CD4-positive, alpha-beta memory T cell (primary cell): ENCODE measurements at regions of chr9 and their contacts with region 1.

Region 1: DNA sequence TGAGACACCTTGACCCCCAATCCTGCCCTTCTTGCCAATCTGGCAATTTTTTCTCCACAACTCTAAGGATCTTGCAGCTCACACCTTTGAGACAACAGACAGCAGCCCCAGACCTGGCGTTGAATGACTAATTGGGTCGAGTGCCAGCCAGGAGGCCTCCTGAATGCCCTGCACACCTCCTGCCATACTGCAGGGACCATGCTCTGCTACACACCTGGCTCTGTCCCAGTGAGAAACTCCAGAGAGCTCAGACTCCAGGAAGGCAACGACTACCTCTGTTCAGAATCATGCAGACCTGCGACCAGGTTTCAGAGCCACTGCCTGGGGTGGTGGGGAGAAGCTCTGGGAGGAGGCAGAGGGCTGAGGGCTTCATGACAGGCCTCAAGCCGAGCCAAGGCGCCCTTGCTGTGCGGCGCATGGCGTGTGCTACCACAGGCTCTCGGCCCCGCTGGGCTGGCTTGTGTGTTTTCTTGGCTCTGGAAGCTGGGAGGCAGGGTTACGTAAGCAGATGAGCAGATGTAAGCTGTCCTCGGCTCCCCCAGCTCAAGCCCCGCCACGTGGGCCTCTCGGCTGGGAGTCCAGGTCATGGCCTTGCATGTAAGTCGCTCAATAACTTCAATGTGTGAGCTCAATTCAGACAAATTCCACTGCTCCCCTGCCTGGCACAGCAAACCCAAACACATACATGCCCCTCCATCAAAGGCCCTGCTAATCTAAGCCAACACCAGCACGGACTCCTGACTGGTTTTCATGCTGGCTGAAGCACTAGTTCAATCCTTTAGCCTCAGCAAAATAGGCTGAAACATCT is 27.5 kb downstream of the B4GALT1 start:
- DNase-seq: no peak
- H3K4me3 ChIP-seq: no peak overlapping the region
- H3K4me3 Mint-ChIP-seq: peak overlapping the region in 7 of 8 donors; percentile 36 to 88 (median 75)
- H3K27ac ChIP-seq: no peak overlapping the region
- H3K27ac Mint-ChIP-seq: peak overlapping the region; percentile 37 to 96 (median 89)
- H3K4me1 ChIP-seq: peaks cover 95% of the 10 kb centered on the region
- H3K4me1 Mint-ChIP-seq: peaks cover 70 to 98% (median 86%) of the 10 kb centered on the region in 4 donors
- H3K27me3 ChIP-seq: no peaks in the 10 kb centered on the region
- H3K27me3 Mint-ChIP-seq: no peaks in the 10 kb centered on the region

Region 2: DNA sequence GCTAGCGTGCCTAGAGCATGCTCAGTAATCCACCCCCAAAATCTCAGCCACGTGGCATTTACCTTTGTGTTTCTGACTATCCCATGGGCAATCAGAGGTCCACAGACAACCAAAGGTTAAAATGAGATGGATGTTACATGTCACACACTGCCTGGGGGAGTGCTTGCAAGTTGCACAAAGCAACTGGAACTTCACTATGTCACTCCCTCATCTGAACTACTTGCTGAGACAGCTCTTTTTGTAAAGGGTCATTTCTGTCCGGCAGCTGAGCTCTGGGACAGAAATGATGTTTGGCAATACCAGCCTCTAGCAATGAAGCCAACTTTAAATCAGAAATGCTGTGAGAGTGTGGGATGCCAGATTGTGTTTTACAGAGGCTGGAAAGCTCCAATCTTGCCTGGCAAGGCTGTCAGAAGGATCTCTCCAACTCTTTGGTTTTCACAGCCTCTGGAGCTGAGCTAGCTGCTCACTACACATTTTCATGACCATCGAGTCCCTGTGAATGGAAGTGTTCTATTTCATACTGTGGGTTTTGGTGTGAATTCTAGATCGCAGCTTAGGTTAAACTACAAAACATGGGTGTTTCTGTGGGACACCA is 422.6 kb before region 1 on chr9:
- CTCF ChIA-PET with region 1: no interaction called
- POLR2A ChIA-PET with region 1: no interaction called
- intact Hi-C with region 1: no loop called
- DNase-seq: no peak
- H3K4me3 ChIP-seq: no peak overlapping the region
- H3K4me3 Mint-ChIP-seq: no peak overlapping the region
- H3K27ac ChIP-seq: no peak overlapping the region
- H3K27ac Mint-ChIP-seq: no peak overlapping the region
- H3K4me1 ChIP-seq: no peaks in the 10 kb centered on the region
- H3K4me1 Mint-ChIP-seq: peaks cover 0 to 1% (median 0%) of the 10 kb centered on the region in 4 donors
- H3K27me3 ChIP-seq: no peaks in the 10 kb centered on the region
- H3K27me3 Mint-ChIP-seq: peaks cover 1 to 2% of the 10 kb centered on the region in 2 donors

Region 3: DNA sequence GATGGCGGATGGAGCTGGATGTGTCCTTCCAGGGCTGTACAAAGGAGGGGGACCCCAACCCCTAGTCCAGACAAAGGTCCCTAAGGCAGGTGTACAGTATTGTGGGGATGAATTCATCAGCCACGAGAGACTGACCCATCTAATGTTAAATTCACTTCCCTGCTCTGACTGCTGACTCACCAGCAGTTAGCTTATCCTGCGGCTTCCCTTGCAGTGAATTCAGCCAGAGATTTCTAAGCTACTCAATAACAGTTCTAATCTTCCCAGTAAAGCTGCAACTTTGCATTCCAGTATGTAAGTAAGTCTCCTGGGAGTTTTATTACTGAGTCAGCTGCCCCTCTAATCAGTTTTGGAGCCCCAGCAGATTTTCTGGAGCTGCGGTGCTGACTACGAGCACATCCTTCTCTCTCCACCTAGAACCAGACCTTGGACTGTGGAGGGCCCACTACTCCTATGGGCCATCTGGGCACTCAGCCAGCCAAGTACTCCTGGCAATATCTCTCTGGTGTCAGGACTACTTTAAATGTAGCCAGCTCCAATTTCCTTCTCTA is 11.5 kb after region 1 on chr9:
- CTCF ChIA-PET with region 1: interaction called, 12 read pairs
- POLR2A ChIA-PET with region 1: interaction called, 15 read pairs
- intact Hi-C with region 1: no loop called
- DNase-seq: no peak
- H3K4me3 ChIP-seq: no peak overlapping the region
- H3K4me3 Mint-ChIP-seq: peak overlapping the region in 5 of 8 donors; percentile 4 to 74 (median 41)
- H3K27ac ChIP-seq: no peak overlapping the region
- H3K27ac Mint-ChIP-seq: peak overlapping the region; percentile 6 to 97 (median 71)
- H3K4me1 ChIP-seq: peaks cover 86% of the 10 kb centered on the region
- H3K4me1 Mint-ChIP-seq: peaks cover 63 to 93% (median 80%) of the 10 kb centered on the region in 4 donors
- H3K27me3 ChIP-seq: no peaks in the 10 kb centered on the region
- H3K27me3 Mint-ChIP-seq: no peaks in the 10 kb centered on the region

Region 4: GRCh38 chr9:33159760-33160127 is 20.1 kb after region 1 on chr9:
- CTCF ChIA-PET with region 1: interaction called, 18 read pairs
- POLR2A ChIA-PET with region 1: interaction called, 376 read pairs
- intact Hi-C with region 1: loop called (anchors 1 kb)
- DNase-seq: peak; percentile 69 to 88 (median 75)
- H3K4me3 ChIP-seq: peak overlapping the region; percentile 30 to 43
- H3K4me3 Mint-ChIP-seq: peak overlapping the region; percentile 73 to 95 (median 83)
- H3K27ac ChIP-seq: peak overlapping the region; percentile 93
- H3K27ac Mint-ChIP-seq: peak overlapping the region; percentile 96 to 100 (median 98)
- H3K4me1 ChIP-seq: peaks cover 99% of the 10 kb centered on the region
- H3K4me1 Mint-ChIP-seq: peaks cover 75 to 100% (median 88%) of the 10 kb centered on the region in 4 donors
- H3K27me3 ChIP-seq: no peaks in the 10 kb centered on the region
- H3K27me3 Mint-ChIP-seq: no peaks in the 10 kb centered on the region

Region 5: GRCh38 chr9:33187519-33188218 is 48.0 kb after region 1 on chr9:
- CTCF ChIA-PET with region 1: no interaction called
- POLR2A ChIA-PET with region 1: no interaction called
- intact Hi-C with region 1: no loop called
- DNase-seq: no peak
- H3K4me3 ChIP-seq: no peak overlapping the region
- H3K4me3 Mint-ChIP-seq: no peak overlapping the region
- H3K27ac ChIP-seq: no peak overlapping the region
- H3K27ac Mint-ChIP-seq: peak overlapping the region in 1 of 7 donors; percentile 25
- H3K4me1 ChIP-seq: no peaks in the 10 kb centered on the region
- H3K4me1 Mint-ChIP-seq: no peaks in the 10 kb centered on the region
- H3K27me3 ChIP-seq: no peaks in the 10 kb centered on the region
- H3K27me3 Mint-ChIP-seq: peaks cover 0 to 1% of the 10 kb centered on the region in 2 donors

Region 6: DNA sequence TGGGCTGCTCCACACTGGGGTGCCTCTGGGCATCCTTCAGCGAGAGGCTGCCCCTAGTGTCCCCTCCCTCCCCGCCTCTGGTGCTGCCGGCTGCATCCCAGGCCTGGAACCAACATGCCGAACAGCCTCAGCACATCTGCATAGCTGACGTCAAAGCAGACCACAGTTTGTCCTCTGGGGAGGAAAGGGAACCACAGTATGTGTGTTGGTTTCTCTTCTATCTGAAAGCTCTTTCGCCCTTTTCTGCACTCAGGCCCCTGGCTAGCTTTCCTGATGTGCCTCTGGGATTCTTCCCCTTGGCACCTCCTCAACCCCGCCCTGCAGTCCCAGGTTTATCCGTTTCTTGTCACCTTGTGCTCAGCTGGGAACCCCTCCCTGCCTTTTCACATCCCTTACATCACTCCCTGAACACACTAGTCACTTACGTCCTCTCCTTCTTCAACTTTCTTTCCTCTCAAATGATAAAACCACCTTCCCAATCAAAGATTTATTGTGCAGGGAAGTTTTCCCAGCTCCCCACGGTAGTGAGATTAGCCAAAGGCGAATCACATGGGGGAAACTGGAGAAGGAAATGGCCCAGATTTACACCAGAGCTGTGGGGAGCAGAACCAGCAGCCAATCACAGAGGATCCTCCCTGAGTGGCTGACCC is 63.1 kb after region 1 on chr9:
- CTCF ChIA-PET with region 1: no interaction called
- POLR2A ChIA-PET with region 1: no interaction called
- intact Hi-C with region 1: no loop called
- DNase-seq: peak in 4 of 5 donors; percentile 27 to 58 (median 36)
- H3K4me3 ChIP-seq: no peak overlapping the region
- H3K4me3 Mint-ChIP-seq: peak overlapping the region in 3 of 8 donors; percentile 27 to 57 (median 27)
- H3K27ac ChIP-seq: no peak overlapping the region
- H3K27ac Mint-ChIP-seq: peak overlapping the region in 4 of 7 donors; percentile 39 to 75 (median 64)
- H3K4me1 ChIP-seq: no peaks in the 10 kb centered on the region
- H3K4me1 Mint-ChIP-seq: peaks cover 4 to 13% (median 5%) of the 10 kb centered on the region in 4 donors
- H3K27me3 ChIP-seq: no peaks in the 10 kb centered on the region
- H3K27me3 Mint-ChIP-seq: peaks cover 0 to 3% of the 10 kb centered on the region in 2 donors